ENCODE measurements at regions of chr12 and their contacts with region 1.

Region 1: GRCh38 chr12:48890657-48891418 is 25.2 kb upstream of the RND1 start:
- DNase-seq: peak; percentile 57 to 79 (median 64)
- H3K4me3 ChIP-seq: no peak overlapping the region
- H3K4me3 Mint-ChIP-seq: peak overlapping the region in 3 of 7 donors; percentile 18 to 42 (median 39)
- H3K27ac ChIP-seq: no peak overlapping the region
- H3K27ac Mint-ChIP-seq: peak overlapping the region in 2 of 8 donors; percentile 11 to 61
- H3K4me1 ChIP-seq: no peaks in the 10 kb centered on the region
- H3K4me1 Mint-ChIP-seq: peaks cover 6 to 10% (median 8%) of the 10 kb centered on the region in 3 donors
- H3K27me3 ChIP-seq: peaks cover 10% of the 10 kb centered on the region
- H3K27me3 Mint-ChIP-seq: peaks cover 9 to 19% of the 10 kb centered on the region in 2 donors

Region 2: DNA sequence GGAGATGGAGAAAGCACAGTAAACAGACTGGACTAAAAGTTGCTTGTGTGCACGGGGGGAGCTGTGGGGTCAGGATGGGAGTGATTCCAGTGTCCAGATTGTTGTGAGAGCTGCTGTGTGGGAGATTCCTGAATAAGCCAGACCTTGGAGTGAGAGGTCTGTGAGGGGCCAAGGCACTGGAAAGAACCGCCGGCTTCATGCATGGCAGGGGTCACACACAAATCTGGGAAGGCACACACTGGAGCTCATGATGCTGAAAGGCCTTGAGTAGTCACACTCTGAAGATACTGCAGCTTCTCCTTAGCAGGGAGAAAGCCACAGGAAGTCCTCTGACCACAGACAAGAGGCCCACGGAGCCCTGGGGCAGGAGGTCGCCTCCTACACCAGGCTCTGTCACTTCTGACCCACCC is 125.1 kb before region 1 on chr12:
- CTCF ChIA-PET with region 1: no interaction called
- POLR2A ChIA-PET with region 1: no interaction called
- DNase-seq: no peak
- H3K4me3 ChIP-seq: no peak overlapping the region
- H3K4me3 Mint-ChIP-seq: no peak overlapping the region
- H3K27ac ChIP-seq: no peak overlapping the region
- H3K27ac Mint-ChIP-seq: peak overlapping the region in 3 of 8 donors; percentile 6 to 67 (median 58)
- H3K4me1 ChIP-seq: no peaks in the 10 kb centered on the region
- H3K4me1 Mint-ChIP-seq: peaks cover 11 to 13% (median 11%) of the 10 kb centered on the region in 3 donors
- H3K27me3 ChIP-seq: no peaks in the 10 kb centered on the region
- H3K27me3 Mint-ChIP-seq: peaks cover 4 to 7% of the 10 kb centered on the region in 2 donors

Region 3: DNA sequence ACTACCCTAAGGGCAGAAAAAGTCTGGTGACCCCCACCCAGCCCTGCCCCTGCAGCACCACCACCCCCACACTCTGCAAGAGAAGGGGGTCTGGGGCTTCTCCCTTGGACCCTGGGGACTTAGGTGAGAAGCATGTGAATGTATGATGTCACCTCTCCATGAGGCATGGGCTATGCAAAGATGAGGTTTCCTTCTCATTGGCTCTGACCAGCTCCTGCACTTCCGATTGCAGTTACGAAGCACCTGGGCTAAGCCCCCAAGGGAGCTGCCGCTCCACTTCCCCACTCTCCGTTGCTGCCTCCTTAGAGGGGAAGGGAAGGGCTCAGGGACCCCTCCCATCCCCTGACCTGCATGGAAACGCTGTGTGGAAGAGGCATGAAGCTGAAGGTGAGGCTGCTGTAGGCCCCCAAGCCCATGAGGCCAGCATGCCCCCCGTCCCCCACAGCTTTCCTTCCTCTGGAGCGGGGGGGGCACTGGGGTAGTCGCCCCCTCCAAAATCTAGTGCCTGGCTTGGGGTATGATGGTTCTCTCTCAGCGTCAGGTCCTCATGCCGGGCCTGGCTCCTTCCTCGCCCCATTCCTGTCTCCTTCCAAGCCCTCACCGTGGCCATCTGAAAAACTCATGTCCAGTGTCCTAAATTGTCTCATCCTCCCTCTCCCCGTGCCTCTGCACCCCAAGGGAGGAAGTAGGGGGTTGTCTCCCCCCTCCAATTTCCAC is 33.4 kb before region 1 on chr12:
- CTCF ChIA-PET with region 1: interaction called, 124 read pairs
- POLR2A ChIA-PET with region 1: interaction called, 22 read pairs
- DNase-seq: no peak
- H3K4me3 ChIP-seq: no peak overlapping the region
- H3K4me3 Mint-ChIP-seq: no peak overlapping the region
- H3K27ac ChIP-seq: no peak overlapping the region
- H3K27ac Mint-ChIP-seq: no peak overlapping the region
- H3K4me1 ChIP-seq: peaks cover 8% of the 10 kb centered on the region
- H3K4me1 Mint-ChIP-seq: peaks cover 7 to 10% (median 10%) of the 10 kb centered on the region in 3 donors
- H3K27me3 ChIP-seq: peaks cover 4% of the 10 kb centered on the region
- H3K27me3 Mint-ChIP-seq: peaks cover 10 to 12% of the 10 kb centered on the region in 2 donors

Region 4: GRCh38 chr12:48865434-48866290 is 25.2 kb before region 1 on chr12 and contains the start of gene RND1:
- CTCF ChIA-PET with region 1: interaction called, 36 read pairs
- POLR2A ChIA-PET with region 1: no interaction called
- DNase-seq: peak; percentile 75 to 90 (median 86)
- H3K4me3 ChIP-seq: peak within 1 kb of the TSS; percentile 84
- H3K4me3 Mint-ChIP-seq: peak within 1 kb of the TSS; percentile 90 to 96 (median 93)
- H3K27ac ChIP-seq: peak within 1 kb of the TSS; percentile 39
- H3K27ac Mint-ChIP-seq: peak within 1 kb of the TSS; percentile 55 to 96 (median 88)
- H3K4me1 ChIP-seq: peaks cover 22% of the 10 kb centered on the region
- H3K4me1 Mint-ChIP-seq: peaks cover 21 to 27% (median 24%) of the 10 kb centered on the region in 3 donors
- H3K27me3 ChIP-seq: peaks cover 22% of the 10 kb centered on the region
- H3K27me3 Mint-ChIP-seq: peaks cover 26 to 30% of the 10 kb centered on the region in 2 donors
- total RNA-seq, gene RND1: 2.0 to 2.6 TPM

Region 5: DNA sequence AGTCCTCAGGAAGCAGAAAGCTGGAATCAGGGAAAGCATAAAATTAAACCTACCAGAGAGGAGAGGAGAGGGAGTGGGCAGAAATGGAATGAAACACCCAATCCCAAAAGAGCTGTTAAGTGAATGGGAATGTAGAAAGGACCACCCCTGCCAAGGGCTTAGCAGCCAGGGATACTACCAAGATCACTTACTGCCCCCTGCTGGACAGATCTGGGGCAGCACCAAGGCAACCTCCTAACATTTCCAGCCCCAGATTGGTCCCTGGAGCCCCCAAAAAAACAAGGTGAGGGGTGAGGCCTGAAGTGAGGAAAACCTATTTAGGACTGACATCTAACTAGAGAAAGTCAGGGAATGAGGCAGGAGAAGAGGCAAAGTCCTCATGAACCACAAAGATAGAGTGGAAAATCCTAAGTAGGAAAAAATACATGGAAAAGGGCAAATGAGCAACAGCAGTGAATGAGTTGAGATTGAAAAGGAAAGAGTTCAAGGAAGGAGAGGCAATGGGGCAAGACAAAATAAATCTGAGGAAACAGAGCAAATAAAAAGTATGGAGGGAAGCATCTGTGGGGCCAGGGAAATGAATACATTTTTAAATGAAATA is 45.6 kb after region 1 on chr12:
- CTCF ChIA-PET with region 1: interaction called, 17 read pairs
- POLR2A ChIA-PET with region 1: no interaction called
- DNase-seq: peak; percentile 75 to 88 (median 82)
- H3K4me3 ChIP-seq: no peak overlapping the region
- H3K4me3 Mint-ChIP-seq: no peak overlapping the region
- H3K27ac ChIP-seq: no peak overlapping the region
- H3K27ac Mint-ChIP-seq: peak overlapping the region; percentile 38 to 98 (median 96)
- H3K4me1 ChIP-seq: peaks cover 33% of the 10 kb centered on the region
- H3K4me1 Mint-ChIP-seq: peaks cover 36 to 49% (median 42%) of the 10 kb centered on the region in 3 donors
- H3K27me3 ChIP-seq: no peaks in the 10 kb centered on the region
- H3K27me3 Mint-ChIP-seq: no peaks in the 10 kb centered on the region

Region 6: GRCh38 chr12:48972213-48972951 is 81.5 kb after region 1 on chr12:
- CTCF ChIA-PET with region 1: no interaction called
- POLR2A ChIA-PET with region 1: no interaction called
- DNase-seq: no peak
- H3K4me3 ChIP-seq: no peak overlapping the region
- H3K4me3 Mint-ChIP-seq: peak overlapping the region in 5 of 7 donors; percentile 16 to 78 (median 73)
- H3K27ac ChIP-seq: no peak overlapping the region
- H3K27ac Mint-ChIP-seq: peak overlapping the region in 2 of 8 donors; percentile 47 to 75
- H3K4me1 ChIP-seq: peaks cover 39% of the 10 kb centered on the region
- H3K4me1 Mint-ChIP-seq: peaks cover 25 to 45% (median 26%) of the 10 kb centered on the region in 3 donors
- H3K27me3 ChIP-seq: peaks cover 42% of the 10 kb centered on the region
- H3K27me3 Mint-ChIP-seq: peaks cover 30 to 34% of the 10 kb centered on the region in 2 donors

Measured in CD8-positive, alpha-beta memory T cell (primary cell).